ENCODE measurements at regions of chr3 and their contacts with region 1.

Region 1: GRCh38 chr3:17841190-17841828 is 98.9 kb upstream of the TBC1D5 start:
- DNase-seq: peak; percentile 46 to 83 (median 71)
- ATAC-seq: peak; percentile 80
- H3K4me3 ChIP-seq: no peak overlapping the region
- H3K4me3 Mint-ChIP-seq: no peak overlapping the region
- H3K27ac ChIP-seq: no peak overlapping the region
- H3K27ac Mint-ChIP-seq: no peak overlapping the region
- H3K4me1 ChIP-seq: no peaks in the 10 kb centered on the region
- H3K4me1 Mint-ChIP-seq: no peaks in the 10 kb centered on the region
- H3K27me3 ChIP-seq: no peaks in the 10 kb centered on the region
- H3K27me3 Mint-ChIP-seq: no peaks in the 10 kb centered on the region
- CTCF ChIP-seq: peak; percentile 87

Region 2: DNA sequence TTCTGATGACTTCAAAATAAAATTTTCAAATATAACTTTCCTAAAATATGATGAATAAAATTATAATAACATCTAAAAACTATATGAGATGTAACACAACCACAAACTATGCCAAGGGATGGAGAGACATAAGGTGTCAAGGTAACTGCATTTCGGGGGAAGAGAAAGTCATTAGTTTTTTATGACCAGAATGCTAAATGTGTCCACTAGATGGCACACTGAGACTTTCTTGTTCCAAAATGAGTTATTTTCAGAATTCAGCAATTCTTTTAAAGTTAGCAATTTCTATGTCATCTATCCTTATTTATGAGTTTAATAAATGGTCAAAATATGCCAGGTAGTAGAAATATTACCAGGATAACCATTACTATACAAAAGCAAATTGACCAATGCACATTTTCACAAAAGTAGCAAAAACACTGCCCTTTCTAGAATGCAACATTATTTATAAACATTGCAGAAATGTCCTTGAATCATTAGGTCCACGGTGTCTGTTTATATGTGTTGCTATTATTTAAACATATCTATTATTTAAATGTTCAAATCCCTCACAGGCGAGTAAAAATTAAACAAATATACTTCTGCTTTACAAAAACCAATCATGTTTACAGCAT is 582.4 kb before region 1 on chr3:
- CTCF ChIA-PET with region 1: interaction called, 11 read pairs
- POLR2A ChIA-PET with region 1: no interaction called
- intact Hi-C with region 1: loop called (anchors 1 kb)
- DNase-seq: peak in 3 of 9 experiments; percentile 15 to 67 (median 58)
- ATAC-seq: no peak
- H3K4me3 ChIP-seq: no peak overlapping the region
- H3K4me3 Mint-ChIP-seq: no peak overlapping the region
- H3K27ac ChIP-seq: no peak overlapping the region
- H3K27ac Mint-ChIP-seq: no peak overlapping the region
- H3K4me1 ChIP-seq: no peaks in the 10 kb centered on the region
- H3K4me1 Mint-ChIP-seq: peaks cover 2% of the 10 kb centered on the region
- H3K27me3 ChIP-seq: no peaks in the 10 kb centered on the region
- H3K27me3 Mint-ChIP-seq: no peaks in the 10 kb centered on the region
- CTCF ChIP-seq: peak; percentile 81

Region 3: DNA sequence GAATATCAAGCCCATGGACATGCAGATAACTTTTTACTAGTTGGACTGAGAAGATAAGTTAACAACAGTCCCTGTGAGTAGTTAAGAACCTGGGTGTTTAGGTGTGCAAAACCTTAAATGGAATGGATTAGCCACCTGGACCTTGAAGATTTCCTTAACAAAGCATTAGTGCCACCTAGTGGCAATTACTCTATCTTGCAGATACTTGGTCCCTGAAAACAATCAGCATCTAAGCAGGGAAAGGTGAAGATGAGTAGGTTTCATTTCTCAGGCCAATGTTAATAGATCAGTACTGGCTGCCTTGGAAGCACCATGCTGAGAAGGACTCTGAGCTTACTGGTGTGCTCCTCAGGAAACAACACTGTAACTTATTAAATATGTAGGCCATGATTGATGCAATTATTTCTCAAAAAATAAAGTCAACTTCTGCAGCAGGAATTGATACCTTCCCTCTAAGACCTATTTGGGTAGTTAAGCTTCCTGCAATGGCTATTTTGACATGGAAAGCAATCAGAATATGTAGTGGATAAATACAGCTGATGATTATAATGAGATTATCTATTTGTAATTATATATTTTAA is 428.3 kb before region 1 on chr3:
- CTCF ChIA-PET with region 1: interaction called, 13 read pairs
- POLR2A ChIA-PET with region 1: no interaction called
- intact Hi-C with region 1: no loop called
- DNase-seq: peak in 4 of 9 experiments; percentile 9 to 67 (median 35)
- ATAC-seq: no peak
- H3K4me3 ChIP-seq: no peak overlapping the region
- H3K4me3 Mint-ChIP-seq: no peak overlapping the region
- H3K27ac ChIP-seq: no peak overlapping the region
- H3K27ac Mint-ChIP-seq: no peak overlapping the region
- H3K4me1 ChIP-seq: no peaks in the 10 kb centered on the region
- H3K4me1 Mint-ChIP-seq: no peaks in the 10 kb centered on the region
- H3K27me3 ChIP-seq: no peaks in the 10 kb centered on the region
- H3K27me3 Mint-ChIP-seq: no peaks in the 10 kb centered on the region
- CTCF ChIP-seq: peak; percentile 71

Region 4: GRCh38 chr3:17431004-17431403 is 410.3 kb before region 1 on chr3:
- CTCF ChIA-PET with region 1: interaction called, 10 read pairs
- POLR2A ChIA-PET with region 1: no interaction called
- intact Hi-C with region 1: loop called (anchors 2 kb)
- DNase-seq: peak in 1 of 9 experiments; percentile 14
- ATAC-seq: no peak
- H3K4me3 ChIP-seq: no peak overlapping the region
- H3K4me3 Mint-ChIP-seq: no peak overlapping the region
- H3K27ac ChIP-seq: no peak overlapping the region
- H3K27ac Mint-ChIP-seq: no peak overlapping the region
- H3K4me1 ChIP-seq: no peaks in the 10 kb centered on the region
- H3K4me1 Mint-ChIP-seq: no peaks in the 10 kb centered on the region
- H3K27me3 ChIP-seq: no peaks in the 10 kb centered on the region
- H3K27me3 Mint-ChIP-seq: no peaks in the 10 kb centered on the region
- CTCF ChIP-seq: peak; percentile 30

Region 5: DNA sequence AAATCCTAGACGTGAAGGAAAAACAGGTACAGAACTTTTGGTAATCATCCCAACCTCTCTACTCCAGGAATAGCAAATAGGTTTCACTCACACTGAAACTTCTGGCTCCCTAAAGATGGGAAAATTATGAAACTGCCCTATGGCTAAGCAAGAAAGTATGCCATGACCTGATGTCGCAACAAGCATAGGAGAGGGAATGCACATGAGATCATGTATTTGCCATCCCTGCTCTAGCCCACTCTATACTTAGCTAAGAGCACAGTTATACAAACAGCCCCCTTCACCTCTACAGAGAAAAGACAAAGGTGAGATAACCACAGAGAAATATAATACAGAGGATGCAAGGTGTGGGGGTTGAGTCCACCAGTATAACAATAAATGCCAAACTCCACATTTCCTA is 201.5 kb before region 1 on chr3:
- CTCF ChIA-PET with region 1: interaction called, 72 read pairs
- POLR2A ChIA-PET with region 1: interaction called, 3 read pairs
- intact Hi-C with region 1: no loop called
- DNase-seq: no peak
- ATAC-seq: no peak
- H3K4me3 ChIP-seq: no peak overlapping the region
- H3K4me3 Mint-ChIP-seq: no peak overlapping the region
- H3K27ac ChIP-seq: no peak overlapping the region
- H3K27ac Mint-ChIP-seq: no peak overlapping the region
- H3K4me1 ChIP-seq: no peaks in the 10 kb centered on the region
- H3K4me1 Mint-ChIP-seq: peaks cover 14% of the 10 kb centered on the region
- H3K27me3 ChIP-seq: no peaks in the 10 kb centered on the region
- H3K27me3 Mint-ChIP-seq: no peaks in the 10 kb centered on the region
- CTCF ChIP-seq: no peak

Region 6: DNA sequence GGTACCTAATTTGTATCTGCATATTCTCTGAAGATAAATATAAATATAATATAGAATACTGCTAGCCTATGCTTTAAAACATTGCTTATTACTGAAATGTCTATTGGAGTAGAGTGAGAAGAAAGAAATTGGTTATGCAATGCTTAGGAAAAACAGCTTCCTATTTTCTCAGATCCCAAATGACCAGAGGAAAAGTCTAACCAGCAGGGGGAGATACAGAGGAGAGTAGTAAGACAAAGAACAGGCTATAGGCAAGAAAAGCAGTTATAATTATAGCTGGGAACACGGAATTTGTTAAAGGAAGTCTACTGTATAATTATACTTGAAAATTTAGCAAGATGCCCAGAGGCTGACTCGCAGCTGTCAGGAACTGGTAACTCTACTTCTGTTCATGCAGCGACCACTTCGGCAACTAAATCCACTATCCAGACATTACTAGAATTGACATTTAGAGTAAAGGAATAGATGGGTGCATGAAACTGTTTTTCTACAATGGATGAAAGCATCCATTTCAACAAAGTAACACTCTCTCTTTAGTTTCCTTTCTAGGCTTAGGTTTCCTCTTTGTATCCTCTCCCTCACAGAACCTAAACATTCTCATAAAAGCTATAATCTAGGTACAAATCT is 196.1 kb before region 1 on chr3:
- CTCF ChIA-PET with region 1: interaction called, 72 read pairs
- POLR2A ChIA-PET with region 1: interaction called, 3 read pairs
- intact Hi-C with region 1: loop called (anchors 1 kb)
- DNase-seq: peak in 2 of 9 experiments; percentile 39 to 51
- ATAC-seq: no peak
- H3K4me3 ChIP-seq: no peak overlapping the region
- H3K4me3 Mint-ChIP-seq: no peak overlapping the region
- H3K27ac ChIP-seq: no peak overlapping the region
- H3K27ac Mint-ChIP-seq: no peak overlapping the region
- H3K4me1 ChIP-seq: no peaks in the 10 kb centered on the region
- H3K4me1 Mint-ChIP-seq: peaks cover 5% of the 10 kb centered on the region
- H3K27me3 ChIP-seq: no peaks in the 10 kb centered on the region
- H3K27me3 Mint-ChIP-seq: no peaks in the 10 kb centered on the region
- CTCF ChIP-seq: peak; percentile 57